ENCODE measurements at regions of chr1 and their contacts with region 1.

Region 1: GRCh38 chr1:169367486-169368405 is at the starts of genes BLZF1 and NME7:
- DNase-seq: peak; percentile 100
- ATAC-seq: peak; percentile 90
- H3K4me3 ChIP-seq: peak within 1 kb of the TSS; percentile 92
- H3K27ac ChIP-seq: peak within 1 kb of the TSS; percentile 87
- H3K4me1 ChIP-seq: peaks cover 46% of the 10 kb centered on the region
- H3K27me3 ChIP-seq: no peaks in the 10 kb centered on the region
- CTCF ChIP-seq: no peak
- total RNA-seq, gene BLZF1: 30.6 and 37.4 TPM in 2 replicates
- total RNA-seq, gene NME7: 18.6 and 18.9 TPM in 2 replicates

Region 2: GRCh38 chr1:168628807-168629206 is 738.9 kb before region 1 on chr1:
- CTCF ChIA-PET with region 1: no interaction called
- POLR2A ChIA-PET with region 1: no interaction called
- intact Hi-C with region 1: loop called (anchors 5 kb)
- DNase-seq: peak; percentile 98
- ATAC-seq: peak; percentile 97
- H3K4me3 ChIP-seq: peak overlapping the region; percentile 6; the same call in 1 of the 2 replicates
- H3K27ac ChIP-seq: peak overlapping the region; percentile 84
- H3K4me1 ChIP-seq: peaks cover 34% of the 10 kb centered on the region
- H3K27me3 ChIP-seq: no peaks in the 10 kb centered on the region
- CTCF ChIP-seq: no peak

Region 3: DNA sequence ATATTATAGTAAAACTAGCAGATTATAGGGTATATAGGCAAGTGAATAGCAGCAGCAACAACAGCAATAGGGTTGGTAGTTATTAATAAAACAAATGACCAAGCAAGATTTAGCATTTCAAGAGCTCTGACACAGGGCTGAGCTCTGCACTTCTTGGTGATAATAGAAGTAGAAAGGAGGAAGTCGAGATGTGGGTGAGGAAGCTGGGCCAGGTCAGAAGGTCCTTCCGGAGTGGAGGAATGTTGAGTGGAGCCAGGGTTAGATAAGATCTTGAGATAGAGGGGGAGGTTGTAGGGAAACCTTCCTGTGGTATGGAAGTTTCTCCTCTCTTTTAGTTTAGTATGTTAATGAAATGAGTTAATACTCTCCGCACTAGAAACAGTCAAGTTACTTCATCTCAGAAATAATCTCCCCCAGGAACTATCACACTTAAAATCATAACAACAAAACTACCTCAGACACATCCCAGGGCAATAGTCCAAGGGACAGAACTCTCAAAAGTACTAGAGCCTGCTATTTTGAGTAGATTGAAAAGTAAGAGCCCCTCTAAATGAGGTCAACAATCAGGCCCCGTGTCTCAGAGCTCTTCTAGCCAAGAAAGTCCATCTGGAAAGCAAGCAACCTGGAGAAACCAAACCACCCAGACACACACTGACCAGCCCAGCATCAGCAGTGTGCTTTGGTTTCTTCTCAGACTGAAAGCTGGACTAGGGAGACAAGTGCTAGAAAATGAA is 306.7 kb before region 1 on chr1:
- CTCF ChIA-PET with region 1: no interaction called
- POLR2A ChIA-PET with region 1: no interaction called
- intact Hi-C with region 1: loop called (anchors 1 kb)
- DNase-seq: peak; percentile 66
- ATAC-seq: peak; percentile 10
- H3K4me3 ChIP-seq: peak overlapping the region; percentile 8; the same call in 1 of the 2 replicates
- H3K27ac ChIP-seq: peak overlapping the region; percentile 93
- H3K4me1 ChIP-seq: peaks cover 34% of the 10 kb centered on the region
- H3K27me3 ChIP-seq: no peaks in the 10 kb centered on the region
- CTCF ChIP-seq: no peak

Region 4: GRCh38 chr1:169307186-169307585 is 60.6 kb before region 1 on chr1:
- CTCF ChIA-PET with region 1: no interaction called
- POLR2A ChIA-PET with region 1: no interaction called
- intact Hi-C with region 1: no loop called
- DNase-seq: no peak
- ATAC-seq: no peak
- H3K4me3 ChIP-seq: no peak overlapping the region
- H3K27ac ChIP-seq: no peak overlapping the region
- H3K4me1 ChIP-seq: peaks cover 31% of the 10 kb centered on the region
- H3K27me3 ChIP-seq: no peaks in the 10 kb centered on the region
- CTCF ChIP-seq: no peak